ENCODE measurements at regions of chr4 and their contacts with region 1.

Region 1: GRCh38 chr4:35734381-35735098 is 509.8 kb downstream of the ARAP2 start:
- DNase-seq: no peak
- H3K4me3 ChIP-seq: no peak overlapping the region
- H3K27ac ChIP-seq: no peak overlapping the region
- H3K4me1 ChIP-seq: no peaks in the 10 kb centered on the region
- H3K27me3 ChIP-seq: no peaks in the 10 kb centered on the region
- CTCF ChIP-seq: no peak
- EP300 ChIP-seq: no peak
- POLR2A ChIP-seq: no peak

Region 2: DNA sequence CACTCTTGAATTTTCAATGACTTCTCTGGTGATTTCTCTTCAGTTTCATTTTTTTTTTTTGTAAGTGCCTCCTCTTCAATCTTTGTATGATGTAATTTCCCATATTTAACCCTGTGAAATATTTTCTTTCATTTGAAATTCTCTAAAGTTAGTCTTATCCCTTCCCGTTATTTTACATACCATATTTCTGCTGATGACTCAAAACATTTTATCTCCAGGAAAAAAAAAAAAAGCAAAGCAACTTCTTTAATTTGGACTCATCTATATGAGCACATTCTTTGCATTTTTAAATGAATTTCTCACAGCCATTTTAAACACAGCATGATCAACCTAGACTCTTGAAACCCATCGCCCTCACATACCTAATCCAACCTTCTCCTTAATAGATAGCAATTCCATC is 1321.6 kb before region 1 on chr4:
- in situ Hi-C with region 1: no loop called
- intact Hi-C with region 1: loop called (anchors 5 kb)
- DNase-seq: no peak
- H3K4me3 ChIP-seq: no peak overlapping the region
- H3K27ac ChIP-seq: no peak overlapping the region
- H3K4me1 ChIP-seq: no peaks in the 10 kb centered on the region
- H3K27me3 ChIP-seq: no peaks in the 10 kb centered on the region
- CTCF ChIP-seq: no peak
- EP300 ChIP-seq: no peak
- POLR2A ChIP-seq: no peak

Measured in transverse colon (tissue), 4 donors.